Naive thymus-derived CD4-positive, alpha-beta T cell (primary cell): ENCODE measurements at regions of chr18 and their contacts with region 1.

Region 1: GRCh38 chr18:36095936-36096519 is 28.7 kb upstream of the RPRD1A start:
- DNase-seq: peak in 7 of 9 donors; percentile 12 to 53 (median 37)
- ATAC-seq: peak; percentile 60
- H3K4me3 ChIP-seq: no peak overlapping the region
- H3K4me3 Mint-ChIP-seq: no peak overlapping the region
- H3K27ac ChIP-seq: no peak overlapping the region
- H3K27ac Mint-ChIP-seq: no peak overlapping the region
- H3K4me1 ChIP-seq: no peaks in the 10 kb centered on the region
- H3K4me1 Mint-ChIP-seq: peaks cover 0 to 11% (median 4%) of the 10 kb centered on the region in 7 donors
- H3K27me3 ChIP-seq: no peaks in the 10 kb centered on the region
- H3K27me3 Mint-ChIP-seq: peaks cover 0 to 21% (median 4%) of the 10 kb centered on the region in 5 donors

Region 2: DNA sequence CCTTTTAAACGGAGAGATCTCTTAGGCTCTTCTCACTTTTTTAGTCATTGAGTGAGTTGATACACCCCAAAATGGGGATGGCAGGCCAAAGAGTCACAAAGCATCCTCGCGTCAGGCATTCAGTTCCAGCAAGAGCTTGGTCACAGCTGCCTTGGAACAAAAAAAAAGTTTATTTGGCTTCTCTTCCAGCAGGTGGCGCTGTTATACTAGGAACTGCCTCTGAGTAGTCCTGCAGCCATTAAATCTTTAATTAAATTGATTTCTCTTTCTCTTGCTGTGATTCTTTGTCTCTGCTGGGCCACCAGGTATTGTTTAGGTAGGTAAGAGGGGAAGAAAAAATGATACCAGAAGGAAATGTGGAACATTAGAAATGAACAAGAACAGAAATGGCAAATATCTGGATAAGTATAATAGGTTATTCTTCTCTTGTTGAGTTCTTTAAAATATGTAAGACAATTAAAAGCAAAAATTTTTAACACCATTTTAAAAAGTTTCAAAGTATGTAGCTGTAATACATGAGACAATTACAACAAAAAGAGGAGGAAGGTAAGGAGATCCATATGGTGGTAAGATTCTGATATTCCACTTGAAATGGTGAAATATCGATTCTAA is 339.4 kb before region 1 on chr18:
- CTCF ChIA-PET with region 1: no interaction called
- POLR2A ChIA-PET with region 1: no interaction called
- intact Hi-C with region 1: loop called (anchors 2 to 5 kb)
- DNase-seq: peak; percentile 21 to 72 (median 56)
- ATAC-seq: peak; percentile 74
- H3K4me3 ChIP-seq: no peak overlapping the region
- H3K4me3 Mint-ChIP-seq: no peak overlapping the region
- H3K27ac ChIP-seq: no peak overlapping the region
- H3K27ac Mint-ChIP-seq: no peak overlapping the region
- H3K4me1 ChIP-seq: no peaks in the 10 kb centered on the region
- H3K4me1 Mint-ChIP-seq: peaks cover 0 to 2% (median 0%) of the 10 kb centered on the region in 7 donors
- H3K27me3 ChIP-seq: no peaks in the 10 kb centered on the region
- H3K27me3 Mint-ChIP-seq: peaks cover 4 to 38% (median 25%) of the 10 kb centered on the region in 5 donors

Region 3: DNA sequence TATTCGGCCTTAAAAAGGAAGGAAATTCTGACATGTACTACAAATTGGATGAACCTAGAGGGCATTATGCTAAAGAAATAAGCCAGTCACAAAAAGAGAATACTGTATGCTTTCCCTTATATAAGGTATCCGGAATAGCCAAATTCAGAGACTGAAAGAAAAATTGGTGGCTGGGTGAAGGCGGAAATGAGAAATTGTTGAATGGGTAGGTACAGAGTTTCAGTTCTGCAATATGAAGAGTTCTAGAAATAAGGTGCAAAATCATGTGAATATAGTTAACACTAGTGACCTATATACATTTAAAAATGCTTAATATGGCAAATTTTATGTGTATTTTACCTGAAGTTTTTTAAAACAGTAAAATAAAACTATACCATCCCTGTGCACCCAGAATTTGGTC is 80.4 kb before region 1 on chr18:
- CTCF ChIA-PET with region 1: interaction called, 5 read pairs
- POLR2A ChIA-PET with region 1: no interaction called
- intact Hi-C with region 1: loop called (anchors 1 kb)
- DNase-seq: no peak
- ATAC-seq: no peak
- H3K4me3 ChIP-seq: no peak overlapping the region
- H3K4me3 Mint-ChIP-seq: no peak overlapping the region
- H3K27ac ChIP-seq: no peak overlapping the region
- H3K27ac Mint-ChIP-seq: no peak overlapping the region
- H3K4me1 ChIP-seq: no peaks in the 10 kb centered on the region
- H3K4me1 Mint-ChIP-seq: peaks cover 0 to 17% (median 5%) of the 10 kb centered on the region in 7 donors
- H3K27me3 ChIP-seq: no peaks in the 10 kb centered on the region
- H3K27me3 Mint-ChIP-seq: no peaks in the 10 kb centered on the region

Region 4: DNA sequence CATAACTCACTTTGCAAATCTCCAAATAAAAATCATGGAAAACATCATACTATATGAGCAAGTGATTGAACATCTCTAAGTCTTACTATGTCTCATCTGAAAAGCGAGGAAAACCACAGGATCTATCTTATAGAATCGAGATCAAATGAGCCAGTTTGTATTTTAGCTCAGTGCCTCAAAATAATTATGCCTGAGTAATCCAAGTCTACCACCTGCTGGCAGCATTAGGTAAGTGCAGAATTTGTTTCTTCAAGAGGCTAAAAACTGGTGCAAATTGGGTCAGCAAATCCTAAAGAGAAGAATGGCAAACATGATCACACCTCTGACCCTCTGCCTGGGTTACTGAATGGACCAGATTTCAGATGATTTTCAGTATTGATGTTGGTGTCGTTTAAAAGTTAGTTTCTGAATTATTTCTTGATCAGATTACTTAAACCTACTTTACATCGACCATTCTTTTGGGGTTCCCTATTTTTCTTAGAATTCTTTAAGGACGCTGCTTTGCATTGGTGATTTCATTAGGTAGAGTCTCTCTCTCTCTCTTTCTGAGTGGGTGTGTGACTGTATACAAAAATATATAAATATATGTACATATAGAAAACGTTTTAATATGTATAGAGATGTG is 188.8 kb after region 1 on chr18:
- CTCF ChIA-PET with region 1: interaction called, 83 read pairs
- POLR2A ChIA-PET with region 1: no interaction called
- intact Hi-C with region 1: loop called (anchors 1 kb)
- DNase-seq: peak in 7 of 9 donors; percentile 20 to 61 (median 54)
- ATAC-seq: peak; percentile 67
- H3K4me3 ChIP-seq: no peak overlapping the region
- H3K4me3 Mint-ChIP-seq: no peak overlapping the region
- H3K27ac ChIP-seq: no peak overlapping the region
- H3K27ac Mint-ChIP-seq: no peak overlapping the region
- H3K4me1 ChIP-seq: no peaks in the 10 kb centered on the region
- H3K4me1 Mint-ChIP-seq: peaks cover 0 to 4% (median 0%) of the 10 kb centered on the region in 7 donors
- H3K27me3 ChIP-seq: no peaks in the 10 kb centered on the region
- H3K27me3 Mint-ChIP-seq: peaks cover 30 to 59% (median 33%) of the 10 kb centered on the region in 5 donors

Region 5: DNA sequence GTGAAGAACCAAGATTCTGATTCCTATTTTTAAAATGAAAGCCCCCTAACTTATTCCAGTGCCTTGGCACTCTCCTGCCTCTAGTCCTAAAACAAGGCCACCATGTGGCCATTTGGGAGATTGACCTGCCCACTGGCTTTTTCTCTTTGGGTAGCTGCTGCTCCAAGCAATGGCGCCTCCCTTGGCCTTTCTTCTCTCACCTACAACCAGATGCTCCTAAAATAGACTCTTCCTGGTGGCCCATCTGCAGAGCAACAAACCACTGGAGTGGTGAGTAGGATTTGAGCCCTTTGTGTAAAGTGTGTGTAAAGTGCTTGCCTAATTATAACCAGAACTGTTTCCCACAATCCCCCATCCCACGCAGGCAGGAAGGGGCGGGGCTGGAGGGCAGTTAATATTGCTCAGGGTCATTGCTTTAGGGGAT is 315.7 kb after region 1 on chr18:
- CTCF ChIA-PET with region 1: no interaction called
- POLR2A ChIA-PET with region 1: no interaction called
- intact Hi-C with region 1: loop called in 1 of 2 experiments (anchors 5 kb)
- DNase-seq: no peak
- ATAC-seq: no peak
- H3K4me3 ChIP-seq: no peak overlapping the region
- H3K4me3 Mint-ChIP-seq: no peak overlapping the region
- H3K27ac ChIP-seq: no peak overlapping the region
- H3K27ac Mint-ChIP-seq: no peak overlapping the region
- H3K4me1 ChIP-seq: no peaks in the 10 kb centered on the region
- H3K4me1 Mint-ChIP-seq: peaks cover 0 to 1% (median 0%) of the 10 kb centered on the region in 7 donors
- H3K27me3 ChIP-seq: no peaks in the 10 kb centered on the region
- H3K27me3 Mint-ChIP-seq: peaks cover 3 to 27% (median 14%) of the 10 kb centered on the region in 5 donors

Region 6: GRCh38 chr18:36572135-36572856 is 476.3 kb after region 1 on chr18:
- CTCF ChIA-PET with region 1: no interaction called
- POLR2A ChIA-PET with region 1: no interaction called
- intact Hi-C with region 1: loop called in 1 of 2 experiments (anchors 2 kb)
- DNase-seq: peak in 1 of 9 donors; percentile 11
- ATAC-seq: no peak
- H3K4me3 ChIP-seq: no peak overlapping the region
- H3K4me3 Mint-ChIP-seq: no peak overlapping the region
- H3K27ac ChIP-seq: no peak overlapping the region
- H3K27ac Mint-ChIP-seq: no peak overlapping the region
- H3K4me1 ChIP-seq: no peaks in the 10 kb centered on the region
- H3K4me1 Mint-ChIP-seq: peaks cover 0 to 6% (median 0%) of the 10 kb centered on the region in 7 donors
- H3K27me3 ChIP-seq: no peaks in the 10 kb centered on the region
- H3K27me3 Mint-ChIP-seq: peaks cover under 1 to 26% (median 18%) of the 10 kb centered on the region in 5 donors